HepG2 (cell line): ENCODE measurements at regions of chr18 and their contacts with region 1.

Region 1: DNA sequence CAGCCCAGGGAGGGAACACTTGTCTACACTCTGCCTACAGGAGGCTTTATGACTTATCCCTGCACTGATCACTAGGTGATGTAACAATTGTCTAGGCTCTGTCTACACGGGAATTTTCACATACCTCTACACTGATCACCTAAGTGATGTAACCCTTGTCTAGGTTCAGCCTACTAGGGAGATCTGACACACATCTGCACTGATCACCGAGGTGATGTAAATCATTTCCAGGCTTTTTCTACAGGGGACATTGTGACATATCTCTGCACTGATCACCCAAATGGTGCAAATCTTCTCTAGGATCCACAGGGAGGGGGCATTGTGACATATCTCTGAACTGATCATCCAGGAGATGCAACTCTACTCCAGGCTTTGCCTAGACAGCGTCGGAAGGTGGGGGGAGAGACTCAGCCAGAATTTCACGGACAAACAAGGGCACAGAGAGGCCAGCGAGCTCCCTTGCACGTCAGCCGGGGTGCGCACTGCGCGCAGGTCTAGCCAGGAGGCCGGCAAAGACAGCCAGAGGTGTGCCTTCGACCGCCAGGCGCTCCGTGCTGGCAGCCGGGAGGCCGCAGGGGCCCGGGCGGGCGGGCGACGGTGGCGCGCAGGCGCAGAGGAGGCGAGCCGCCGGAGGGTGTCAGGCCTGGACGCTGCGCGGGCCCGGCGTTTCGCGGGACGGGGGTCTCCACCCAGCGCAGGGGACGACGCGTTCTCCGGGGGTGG is 46.9 kb upstream of the USP14 start:
- DNase-seq: peak; percentile 59
- ATAC-seq: peak; percentile 67
- H3K4me3 ChIP-seq: peak overlapping the region in 2 of 3 experiments; percentile 11 to 56; a peak in 2 of 6 replicates
- H3K27ac ChIP-seq: peak overlapping the region; percentile 43
- H3K4me1 ChIP-seq: peaks cover 27% of the 10 kb centered on the region
- H3K27me3 ChIP-seq: no peaks in the 10 kb centered on the region
- CTCF ChIP-seq: peak; percentile 9; the same call in 1 of the 2 replicates
- EP300 ChIP-seq: no peak
- POLR2A ChIP-seq: peak in 1 of 2 experiments; percentile 47; a peak in 1 of 4 replicates
- RAD21 ChIP-seq: no peak

Region 2: GRCh38 chr18:158128-159036 is 46.9 kb after region 1 on chr18 and contains the start of gene USP14:
- CTCF ChIA-PET with region 1: interaction called, 3 read pairs
- POLR2A ChIA-PET with region 1: no interaction called
- in situ Hi-C with region 1: no loop called
- intact Hi-C with region 1: loop called (anchors 5 kb)
- DNase-seq: peak; percentile 94
- ATAC-seq: peak; percentile 92
- H3K4me3 ChIP-seq: peak within 1 kb of the TSS; percentile 75 to 90 (median 88)
- H3K27ac ChIP-seq: peak within 1 kb of the TSS; percentile 80
- H3K4me1 ChIP-seq: peaks cover 55% of the 10 kb centered on the region
- H3K27me3 ChIP-seq: peaks cover 0 to 3% of the 10 kb centered on the region in 2 experiments; a peak in 1 of 5 replicates
- CTCF ChIP-seq: peak; percentile 39; the same call in 1 of the 2 replicates
- EP300 ChIP-seq: no peak; a peak in 1 of 4 replicates
- POLR2A ChIP-seq: peak; percentile 56 to 83
- RAD21 ChIP-seq: peak; percentile 56
- total RNA-seq, gene USP14: 16.6 and 57.4 TPM in 2 replicates

Region 3: GRCh38 chr18:527146-527545 is 415.7 kb after region 1 on chr18:
- CTCF ChIA-PET with region 1: no interaction called
- POLR2A ChIA-PET with region 1: no interaction called
- in situ Hi-C with region 1: no loop called
- intact Hi-C with region 1: no loop called
- DNase-seq: no peak
- ATAC-seq: no peak
- H3K4me3 ChIP-seq: no peak overlapping the region
- H3K27ac ChIP-seq: no peak overlapping the region
- H3K4me1 ChIP-seq: peaks cover 11% of the 10 kb centered on the region
- H3K27me3 ChIP-seq: no peaks in the 10 kb centered on the region
- CTCF ChIP-seq: no peak
- EP300 ChIP-seq: no peak
- POLR2A ChIP-seq: no peak
- RAD21 ChIP-seq: no peak